A549 (cell line): ENCODE measurements at regions of chr20 and their contacts with region 1.

Region 1: DNA sequence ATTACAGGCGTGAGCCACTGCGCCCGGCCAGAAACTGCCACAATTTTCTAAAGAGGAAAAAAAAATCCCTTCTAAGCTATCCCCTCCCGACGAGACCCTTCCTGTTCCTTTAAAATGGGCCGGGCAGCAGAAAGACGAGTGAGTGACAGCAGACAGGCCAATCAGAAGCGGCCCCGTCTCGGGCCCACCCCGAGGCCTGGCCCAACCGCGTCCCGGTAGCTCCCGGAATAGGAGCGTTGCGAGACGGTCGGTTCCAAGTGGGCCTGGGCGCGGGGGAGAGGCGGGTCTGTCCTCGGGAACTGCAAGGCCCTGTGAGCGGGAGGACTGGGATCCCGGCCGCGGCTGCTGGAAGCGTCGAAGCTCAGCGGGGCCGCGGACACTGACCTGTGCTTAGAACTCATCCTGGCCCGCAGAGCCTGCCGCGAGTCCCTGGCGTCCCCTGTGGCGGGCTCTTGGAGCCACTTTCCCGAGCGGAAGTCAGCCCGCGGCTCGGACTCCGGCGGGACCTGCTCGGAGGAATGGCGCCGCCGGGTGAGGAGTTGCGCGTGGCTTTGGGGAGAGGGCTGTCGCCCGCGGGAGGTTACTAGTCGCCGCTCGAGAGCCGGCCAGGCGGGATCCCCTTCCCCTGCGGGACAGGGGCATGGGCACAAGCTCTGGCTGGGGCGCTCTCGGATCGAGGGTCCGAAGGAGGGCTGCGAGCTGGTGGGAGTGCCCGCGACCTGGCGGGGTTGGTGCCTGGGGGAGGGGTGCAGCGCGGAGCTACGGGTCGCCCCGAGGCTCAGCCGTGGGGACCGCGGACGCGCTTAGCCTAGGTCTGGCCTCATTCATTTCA is at the starts of genes MROH8 and RPN2:
- DNase-seq: peak; percentile 93 to 98
- ATAC-seq: peak; percentile 98
- H3K4me3 ChIP-seq: peak within 1 kb of the TSS; percentile 82
- H3K27ac ChIP-seq: peak within 1 kb of the TSS; percentile 92 to 99
- H3K4me1 ChIP-seq: peaks cover 14% of the 10 kb centered on the region
- CTCF ChIP-seq: no peak
- EP300 ChIP-seq: no peak
- POLR2A ChIP-seq: peak; percentile 56
- RAD21 ChIP-seq: no peak
- polyA plus RNA-seq, gene MROH8: 3.3 and 3.9 TPM in 2 replicates
- polyA plus RNA-seq, gene RPN2: 391 and 485 TPM in 2 replicates

Region 2: GRCh38 chr20:37075932-37076685 is 102.9 kb before region 1 on chr20:
- CTCF ChIA-PET with region 1: no interaction called
- POLR2A ChIA-PET with region 1: no interaction called
- DNase-seq: no peak
- ATAC-seq: peak in 1 of 2 experiments; percentile 46; a peak in 2 of 6 replicates
- H3K4me3 ChIP-seq: no peak overlapping the region
- H3K27ac ChIP-seq: no peak overlapping the region
- H3K4me1 ChIP-seq: peaks cover 12% of the 10 kb centered on the region; the same call in 1 of the 3 replicates
- CTCF ChIP-seq: no peak
- EP300 ChIP-seq: no peak
- POLR2A ChIP-seq: no peak
- RAD21 ChIP-seq: no peak

Region 3: GRCh38 chr20:37165031-37165430 is 14.0 kb before region 1 on chr20:
- CTCF ChIA-PET with region 1: interaction called, 19 read pairs
- POLR2A ChIA-PET with region 1: no interaction called
- DNase-seq: no peak
- ATAC-seq: no peak
- H3K4me3 ChIP-seq: no peak overlapping the region
- H3K27ac ChIP-seq: no peak overlapping the region
- H3K4me1 ChIP-seq: no peaks in the 10 kb centered on the region
- CTCF ChIP-seq: no peak
- EP300 ChIP-seq: no peak
- POLR2A ChIP-seq: no peak
- RAD21 ChIP-seq: no peak